Activated CD4-positive, alpha-beta T cell treated with anti-CD3 and anti-CD28 coated beads for 36 hours (primary cell): ENCODE measurements at regions of chr12 and their contacts with region 1.

Region 1: DNA sequence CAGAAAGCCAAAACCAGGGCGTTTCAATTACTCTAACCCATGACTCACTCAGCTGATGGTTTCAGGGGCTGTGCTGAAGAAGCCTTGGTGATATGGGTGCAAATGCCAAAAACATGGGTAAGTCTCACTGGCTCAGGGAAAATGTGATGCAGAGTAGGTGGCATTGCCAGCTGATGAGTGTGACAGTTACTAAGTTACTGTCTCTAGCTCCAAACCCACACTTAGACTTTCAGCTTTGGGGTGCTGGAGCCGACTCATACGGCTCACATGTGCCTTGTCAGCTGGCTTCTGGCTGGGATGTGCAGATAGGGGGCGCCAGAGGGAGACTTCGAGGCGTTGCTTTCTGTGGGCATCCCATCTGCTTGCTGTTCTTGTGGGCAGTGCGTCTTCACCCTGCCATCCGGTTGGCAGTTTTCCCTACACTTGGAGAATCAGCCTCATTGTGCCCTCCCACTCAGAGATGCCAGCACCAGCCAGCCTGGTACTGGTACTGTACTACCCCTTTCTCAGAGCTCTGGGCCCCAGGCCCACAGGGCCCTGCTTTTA is 11.1 kb upstream of the KRT7 start:
- DNase-seq: peak; percentile 96
- ATAC-seq: peak; percentile 98
- H3K4me3 Mint-ChIP-seq: no peak overlapping the region
- H3K27ac Mint-ChIP-seq: peak overlapping the region; percentile 40
- H3K4me1 Mint-ChIP-seq: peaks cover 20% of the 10 kb centered on the region
- H3K27me3 Mint-ChIP-seq: peaks cover 29% of the 10 kb centered on the region

Region 2: DNA sequence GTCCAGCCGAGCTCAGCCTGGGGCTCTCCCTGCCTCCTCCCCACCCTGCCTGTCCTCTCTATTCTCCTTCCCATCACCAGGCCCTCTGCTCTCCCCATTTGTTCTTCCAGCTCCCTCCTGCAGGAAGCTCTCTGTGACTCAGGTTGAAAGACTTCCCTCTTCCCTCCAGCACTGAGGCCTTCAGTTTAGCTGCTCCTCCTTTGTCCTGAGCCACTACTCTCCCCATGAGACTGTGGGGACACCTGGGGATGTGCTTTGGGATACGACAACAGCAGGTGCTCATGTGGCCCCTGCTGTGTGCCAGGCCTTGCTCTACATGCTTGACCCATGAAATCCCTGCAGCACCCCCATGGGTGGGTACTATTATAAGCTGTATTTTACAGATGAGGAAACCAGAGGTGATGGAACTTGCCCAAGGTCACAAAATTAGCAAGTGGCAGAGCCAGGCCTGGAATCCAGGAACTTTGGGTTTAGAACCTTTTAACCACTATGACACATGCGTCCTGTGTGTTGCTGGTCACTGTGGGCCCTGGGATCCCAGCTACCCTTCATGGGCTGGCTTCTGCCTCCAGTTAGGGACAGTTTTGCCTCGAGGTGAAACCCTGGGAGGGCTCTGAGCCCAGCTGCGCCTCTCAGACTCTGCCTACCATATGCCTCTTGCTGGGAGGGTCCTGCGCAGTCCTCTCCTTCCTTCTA is 35.7 kb before region 1 on chr12:
- CTCF ChIA-PET with region 1: no interaction called
- POLR2A ChIA-PET with region 1: no interaction called
- intact Hi-C with region 1: no loop called
- DNase-seq: no peak
- ATAC-seq: no peak
- H3K4me3 Mint-ChIP-seq: no peak overlapping the region
- H3K27ac Mint-ChIP-seq: no peak overlapping the region
- H3K4me1 Mint-ChIP-seq: no peaks in the 10 kb centered on the region
- H3K27me3 Mint-ChIP-seq: peaks cover 2% of the 10 kb centered on the region

Region 3: DNA sequence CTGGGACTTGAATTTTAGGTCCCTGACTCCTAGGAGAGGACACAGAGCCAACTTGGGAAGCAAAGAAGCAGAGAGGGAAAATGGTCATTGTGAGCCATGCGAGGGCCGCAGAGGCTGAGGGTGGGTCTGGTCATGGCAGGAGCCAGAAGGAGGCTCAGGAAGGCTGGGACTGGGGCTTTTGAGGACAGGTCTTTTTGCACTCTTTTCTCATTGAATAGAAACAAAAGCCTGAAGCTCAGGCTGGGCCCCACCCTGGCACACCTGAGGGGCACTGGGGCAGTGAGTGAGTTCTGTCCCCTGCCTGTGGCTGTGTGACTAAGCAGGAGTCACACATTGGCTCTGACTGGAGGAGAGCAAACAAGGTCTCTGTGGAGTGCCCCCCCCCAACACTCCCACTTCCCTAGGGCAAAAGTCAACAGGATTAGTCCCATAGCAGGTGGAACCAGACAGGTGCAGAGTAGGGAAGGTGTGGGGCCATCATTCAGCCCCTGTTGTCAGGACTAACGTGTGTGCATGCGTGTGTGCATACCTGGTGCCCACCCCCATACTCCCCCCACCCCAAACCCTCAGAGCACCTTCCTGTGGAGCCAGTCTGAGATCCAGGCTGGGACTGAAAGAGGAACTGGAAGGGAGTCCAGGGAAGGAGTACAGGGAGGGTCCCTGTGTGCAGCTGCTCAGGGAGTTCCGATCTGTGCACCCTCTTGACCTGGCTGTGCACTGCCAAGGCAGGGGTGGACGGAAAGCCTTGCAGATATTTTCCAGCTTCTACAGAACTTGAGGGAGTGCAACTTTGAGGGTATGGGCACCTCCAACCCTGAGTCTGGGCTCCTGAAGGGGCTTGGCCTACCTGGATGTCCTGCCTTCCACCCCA is 14.1 kb after region 1 on chr12:
- CTCF ChIA-PET with region 1: interaction called, 42 read pairs
- POLR2A ChIA-PET with region 1: no interaction called
- intact Hi-C with region 1: no loop called
- DNase-seq: no peak
- ATAC-seq: no peak
- H3K4me3 Mint-ChIP-seq: no peak overlapping the region
- H3K27ac Mint-ChIP-seq: no peak overlapping the region
- H3K4me1 Mint-ChIP-seq: no peaks in the 10 kb centered on the region
- H3K27me3 Mint-ChIP-seq: peaks cover 31% of the 10 kb centered on the region

Region 4: DNA sequence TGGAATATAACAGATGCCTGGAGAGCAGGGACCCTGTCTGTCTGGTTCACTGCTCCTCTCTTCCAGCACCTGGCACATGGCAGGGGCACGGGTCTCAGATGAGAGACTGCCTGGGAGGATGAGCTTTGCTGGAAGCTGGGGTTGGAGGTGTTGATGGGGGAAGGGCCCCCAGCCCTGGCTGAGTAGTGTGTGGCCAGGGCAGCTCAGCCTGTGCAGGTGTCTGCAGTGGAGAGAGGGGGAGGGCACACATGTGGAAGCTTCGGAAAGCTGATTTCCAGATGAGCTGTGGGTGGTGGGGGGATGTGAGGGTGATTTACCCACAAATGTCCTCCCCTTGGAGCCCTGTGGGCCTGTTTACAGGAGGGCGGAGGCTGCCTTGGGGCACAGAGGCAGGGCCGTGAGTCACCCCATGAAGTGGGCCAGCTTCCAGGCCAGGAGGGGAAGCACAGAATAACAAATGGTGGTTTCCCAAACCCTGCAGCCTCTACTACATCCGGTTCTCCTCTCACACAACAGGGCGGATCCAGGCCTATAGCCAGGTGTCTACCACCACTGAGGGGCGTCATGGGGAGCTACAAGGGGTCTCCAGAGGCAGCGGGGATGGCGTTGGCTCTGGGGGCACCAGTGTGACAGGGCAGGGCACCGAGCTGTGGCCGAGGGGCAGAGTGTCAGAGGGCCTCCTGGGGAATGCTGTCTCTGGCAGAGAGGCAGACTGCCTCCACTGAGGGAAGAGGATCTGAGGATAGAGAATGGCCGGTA is 22.1 kb after region 1 on chr12:
- CTCF ChIA-PET with region 1: interaction called, 42 read pairs
- POLR2A ChIA-PET with region 1: no interaction called
- intact Hi-C with region 1: loop called in 1 of 2 experiments (anchors 1 kb)
- DNase-seq: peak; percentile 88
- ATAC-seq: peak; percentile 99
- H3K4me3 Mint-ChIP-seq: peak overlapping the region; percentile 50
- H3K27ac Mint-ChIP-seq: peak overlapping the region; percentile 78
- H3K4me1 Mint-ChIP-seq: peaks cover 25% of the 10 kb centered on the region
- H3K27me3 Mint-ChIP-seq: peaks cover 10% of the 10 kb centered on the region